Uterus (tissue), 4 donors: ENCODE measurements at regions of chr7 and their contacts with region 1.

Region 1: GRCh38 chr7:25851332-25852210 is 300.4 kb upstream of the NFE2L3 start:
- DNase-seq: peak; percentile 93
- H3K4me3 ChIP-seq: no peak overlapping the region
- H3K27ac ChIP-seq: peak overlapping the region; percentile 97
- H3K4me1 ChIP-seq: peaks cover 29 to 46% of the 10 kb centered on the region in 2 donors
- H3K27me3 ChIP-seq: peaks cover 0 to 2% of the 10 kb centered on the region in 2 donors
- CTCF ChIP-seq: peak; percentile 84 to 93 (median 87)
- POLR2A ChIP-seq: no peak

Region 2: GRCh38 chr7:25259587-25260243 is 591.9 kb before region 1 on chr7:
- intact Hi-C with region 1: loop called (anchors 5 kb)
- DNase-seq: peak; percentile 67 to 80
- H3K4me3 ChIP-seq: no peak overlapping the region
- H3K27ac ChIP-seq: peak overlapping the region in 1 of 2 donors; percentile 69
- H3K4me1 ChIP-seq: peaks cover 0 to 5% of the 10 kb centered on the region in 2 donors
- H3K27me3 ChIP-seq: no peaks in the 10 kb centered on the region
- CTCF ChIP-seq: peak; percentile 81 to 93 (median 90)
- POLR2A ChIP-seq: no peak

Region 3: GRCh38 chr7:25389489-25390106 is 462.0 kb before region 1 on chr7:
- intact Hi-C with region 1: loop called (anchors 5 kb)
- DNase-seq: no peak
- H3K4me3 ChIP-seq: no peak overlapping the region
- H3K27ac ChIP-seq: peak overlapping the region in 1 of 2 donors; percentile 8
- H3K4me1 ChIP-seq: peaks cover 0 to 21% of the 10 kb centered on the region in 2 donors
- H3K27me3 ChIP-seq: no peaks in the 10 kb centered on the region
- CTCF ChIP-seq: peak; percentile 67 to 77 (median 71)
- POLR2A ChIP-seq: no peak

Region 4: GRCh38 chr7:25565949-25566348 is 285.6 kb before region 1 on chr7:
- intact Hi-C with region 1: loop called (anchors 10 kb)
- DNase-seq: peak; percentile 67 to 79
- H3K4me3 ChIP-seq: no peak overlapping the region
- H3K27ac ChIP-seq: peak overlapping the region; percentile 58 to 73
- H3K4me1 ChIP-seq: peaks cover 0 to 6% of the 10 kb centered on the region in 2 donors
- H3K27me3 ChIP-seq: no peaks in the 10 kb centered on the region
- CTCF ChIP-seq: peak; percentile 97 to 100 (median 99)
- POLR2A ChIP-seq: no peak

Region 5: GRCh38 chr7:25656581-25657026 is 195.0 kb before region 1 on chr7:
- intact Hi-C with region 1: loop called (anchors 1 kb)
- DNase-seq: no peak
- H3K4me3 ChIP-seq: no peak overlapping the region
- H3K27ac ChIP-seq: peak overlapping the region; percentile 54 to 82
- H3K4me1 ChIP-seq: no peaks in the 10 kb centered on the region
- H3K27me3 ChIP-seq: no peaks in the 10 kb centered on the region
- CTCF ChIP-seq: no peak
- POLR2A ChIP-seq: no peak

Region 6: DNA sequence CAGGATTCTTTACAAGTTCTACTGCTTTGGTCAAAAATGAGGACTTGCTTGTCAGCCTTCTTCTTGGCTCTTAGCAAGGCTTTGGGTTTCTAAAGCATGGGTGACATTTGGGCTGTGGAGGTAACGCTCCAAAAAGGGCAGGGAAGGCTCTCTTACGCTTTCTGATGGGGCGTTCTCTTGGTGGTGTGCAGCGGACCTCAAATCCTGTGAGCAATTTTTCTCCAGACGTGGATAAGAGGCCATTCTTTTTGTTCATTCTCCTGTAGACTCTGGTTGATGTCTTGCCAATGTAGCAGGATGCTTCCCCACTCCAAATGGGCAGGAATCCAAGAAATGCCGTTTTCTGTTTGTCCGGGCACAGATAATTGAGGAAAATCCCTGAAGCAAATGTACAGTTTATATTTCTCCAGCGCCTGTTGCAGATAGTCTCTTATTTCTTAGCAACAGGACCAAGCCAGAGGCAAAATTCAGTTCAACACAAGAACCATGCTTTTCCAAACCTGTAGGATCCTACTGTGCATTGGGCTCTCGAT is 162.0 kb after region 1 on chr7:
- intact Hi-C with region 1: no loop called
- DNase-seq: no peak
- H3K4me3 ChIP-seq: no peak overlapping the region
- H3K27ac ChIP-seq: no peak overlapping the region
- H3K4me1 ChIP-seq: no peaks in the 10 kb centered on the region
- H3K27me3 ChIP-seq: no peaks in the 10 kb centered on the region
- CTCF ChIP-seq: no peak
- POLR2A ChIP-seq: no peak

Region 7: GRCh38 chr7:27160546-27161213 is 1309.1 kb after region 1 on chr7:
- intact Hi-C with region 1: loop called (anchors 5 kb)
- DNase-seq: peak; percentile 88 to 90
- H3K4me3 ChIP-seq: peak overlapping the region; percentile 49
- H3K27ac ChIP-seq: peak overlapping the region; percentile 94 to 96
- H3K4me1 ChIP-seq: no peaks in the 10 kb centered on the region
- H3K27me3 ChIP-seq: no peaks in the 10 kb centered on the region
- CTCF ChIP-seq: peak; percentile 97 to 100 (median 100)
- POLR2A ChIP-seq: no peak

Region 8: DNA sequence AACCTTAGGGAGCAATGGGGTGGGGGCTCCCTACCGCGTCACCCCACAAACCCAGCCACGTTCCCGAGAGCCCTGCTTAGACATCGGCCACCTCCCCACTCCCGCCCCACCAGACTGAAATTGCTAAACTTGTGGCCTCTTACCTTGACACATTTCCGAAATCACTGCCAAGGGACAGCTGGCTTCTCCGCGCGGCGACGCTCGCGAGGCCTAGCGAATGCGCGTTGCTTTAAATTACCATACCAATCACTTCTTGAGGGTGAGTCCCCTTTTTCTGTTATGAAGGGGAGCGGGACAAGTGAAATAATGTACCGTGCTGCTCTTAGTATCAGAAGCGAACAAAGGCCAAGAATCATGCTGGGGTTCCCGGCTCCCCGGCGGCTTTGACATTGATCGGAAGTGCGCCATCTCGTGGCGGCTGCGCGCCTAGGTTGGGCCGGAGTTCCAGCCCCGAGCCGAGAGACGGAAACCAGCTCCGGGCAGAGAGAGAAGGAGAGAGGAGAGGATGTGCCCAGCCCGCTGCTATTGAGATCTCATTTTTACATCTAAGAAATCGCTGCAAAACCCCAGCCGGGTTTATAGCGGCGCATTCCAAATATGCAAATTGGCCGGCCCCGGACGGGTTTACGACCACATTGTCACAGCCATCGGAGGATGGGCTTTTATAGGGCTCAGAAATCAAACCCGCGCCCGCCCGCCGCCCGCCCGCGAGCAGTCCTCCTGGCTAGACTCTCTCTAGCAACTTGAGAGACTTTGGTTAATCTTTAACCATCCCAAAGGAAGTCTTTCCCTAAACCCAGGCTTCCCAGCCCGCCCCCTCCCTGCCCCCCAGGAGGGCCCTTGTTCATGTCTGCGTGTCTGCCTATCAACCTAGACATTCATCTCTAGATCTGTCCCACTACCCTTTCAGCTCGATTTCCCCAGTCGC is 1328.2 kb after region 1 on chr7:
- intact Hi-C with region 1: loop called (anchors 5 kb)
- DNase-seq: peak; percentile 86 to 90
- H3K4me3 ChIP-seq: peak overlapping the region; percentile 58 to 66
- H3K27ac ChIP-seq: peak overlapping the region; percentile 94 to 96
- H3K4me1 ChIP-seq: no peaks in the 10 kb centered on the region
- H3K27me3 ChIP-seq: no peaks in the 10 kb centered on the region
- CTCF ChIP-seq: peak; percentile 68 to 94 (median 84)
- POLR2A ChIP-seq: peak in 1 of 2 donors; percentile 52

Region 9: GRCh38 chr7:27192546-27193337 is 1341.2 kb after region 1 on chr7:
- intact Hi-C with region 1: no loop called
- DNase-seq: peak; percentile 57 to 68
- H3K4me3 ChIP-seq: peak overlapping the region; percentile 45 to 55
- H3K27ac ChIP-seq: peak overlapping the region; percentile 94 to 96
- H3K4me1 ChIP-seq: peaks cover 0 to 4% of the 10 kb centered on the region in 2 donors
- H3K27me3 ChIP-seq: peaks cover 10 to 20% of the 10 kb centered on the region in 2 donors
- CTCF ChIP-seq: no peak
- POLR2A ChIP-seq: no peak